ENCODE measurements at regions of chr10 and their contacts with region 1.

Region 1: GRCh38 chr10:79149662-79150443 is 81.1 kb downstream of the ZMIZ1 start:
- DNase-seq: no peak
- H3K4me3 ChIP-seq: no peak overlapping the region
- H3K27ac ChIP-seq: peak overlapping the region; percentile 88
- H3K4me1 ChIP-seq: peaks cover 100% of the 10 kb centered on the region
- H3K27me3 ChIP-seq: no peaks in the 10 kb centered on the region
- CTCF ChIP-seq: no peak
- POLR2A ChIP-seq: no peak

Region 2: DNA sequence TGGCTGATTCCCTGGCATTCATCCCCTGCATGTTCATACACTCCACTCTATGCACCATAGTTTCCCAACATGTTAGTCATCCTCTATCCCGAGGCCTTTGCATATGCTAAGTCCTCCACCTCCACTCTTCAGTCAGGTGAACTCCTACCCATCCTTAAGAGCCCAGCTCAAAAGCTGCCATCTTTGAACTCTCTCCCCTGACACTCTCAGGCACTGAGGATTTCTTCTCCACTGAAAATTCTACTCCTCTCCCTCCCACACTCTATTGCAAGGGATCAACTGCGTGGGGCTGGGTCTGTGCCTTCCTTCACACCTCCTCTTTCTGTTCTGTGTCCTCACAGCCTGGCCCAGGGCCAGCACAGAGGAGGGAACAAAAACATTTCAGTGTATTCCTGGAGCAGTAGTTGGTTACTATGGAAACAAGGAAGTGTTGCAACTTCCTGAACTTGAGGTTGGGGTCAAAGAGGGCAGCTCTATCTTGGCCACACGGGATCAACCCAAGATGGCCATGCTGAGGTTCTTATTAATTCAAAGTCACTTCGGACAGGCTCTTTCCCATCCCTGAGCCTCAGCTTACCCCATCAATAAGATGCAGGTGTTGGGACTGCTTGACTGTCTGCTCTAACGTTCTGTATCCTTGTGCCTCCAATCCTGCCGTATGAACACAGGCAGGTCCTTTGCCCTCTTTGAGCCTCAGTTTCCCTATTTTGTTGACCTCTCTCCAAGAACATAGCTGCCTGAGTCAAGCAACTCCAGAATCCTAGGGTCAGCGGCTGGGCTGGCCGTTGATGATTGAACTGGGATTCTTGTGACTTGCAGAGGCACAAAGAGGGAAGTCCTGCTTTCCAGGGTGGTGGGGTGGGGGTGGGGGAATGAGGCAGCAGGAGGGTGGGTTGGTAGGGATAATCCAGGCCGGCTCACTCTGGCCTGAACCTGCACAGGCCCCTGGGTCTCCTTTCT is 65.6 kb before region 1 on chr10:
- intact Hi-C with region 1: loop called (anchors 5 kb)
- DNase-seq: peak in 1 of 2 donors; percentile 97
- H3K4me3 ChIP-seq: no peak overlapping the region
- H3K27ac ChIP-seq: peak overlapping the region; percentile 59
- H3K4me1 ChIP-seq: peaks cover 100% of the 10 kb centered on the region
- H3K27me3 ChIP-seq: no peaks in the 10 kb centered on the region
- CTCF ChIP-seq: no peak
- POLR2A ChIP-seq: no peak